ENCODE measurements at regions of chr10 and their contacts with region 1.

Region 1: GRCh38 chr10:17430647-17431355 is 23.6 kb downstream of the ST8SIA6 start:
- DNase-seq: peak; percentile 44 to 69
- ATAC-seq: peak; percentile 86 to 95; a peak in 5 of 6 replicates
- H3K4me3 ChIP-seq: no peak overlapping the region
- H3K27ac ChIP-seq: no peak overlapping the region
- H3K4me1 ChIP-seq: no peaks in the 10 kb centered on the region
- CTCF ChIP-seq: peak; percentile 87
- EP300 ChIP-seq: no peak
- POLR2A ChIP-seq: no peak
- RAD21 ChIP-seq: peak; percentile 78 to 80

Region 2: GRCh38 chr10:17409170-17409733 is 21.5 kb before region 1 on chr10:
- CTCF ChIA-PET with region 1: interaction called, 12 read pairs
- POLR2A ChIA-PET with region 1: no interaction called
- DNase-seq: peak in 1 of 2 experiments; percentile 14
- ATAC-seq: peak in 1 of 2 experiments; percentile 51; a peak in 2 of 6 replicates
- H3K4me3 ChIP-seq: no peak overlapping the region
- H3K27ac ChIP-seq: no peak overlapping the region
- H3K4me1 ChIP-seq: no peaks in the 10 kb centered on the region
- CTCF ChIP-seq: peak; percentile 44; the same call in 2 of the 3 replicates
- EP300 ChIP-seq: no peak
- POLR2A ChIP-seq: no peak
- RAD21 ChIP-seq: peak; percentile 31 to 56; a peak in 3 of 5 replicates

Region 3: GRCh38 chr10:17418249-17418648 is 12.6 kb before region 1 on chr10:
- CTCF ChIA-PET with region 1: interaction called, 28 read pairs
- POLR2A ChIA-PET with region 1: no interaction called
- DNase-seq: no peak
- ATAC-seq: no peak
- H3K4me3 ChIP-seq: no peak overlapping the region
- H3K27ac ChIP-seq: no peak overlapping the region
- H3K4me1 ChIP-seq: no peaks in the 10 kb centered on the region
- CTCF ChIP-seq: no peak
- EP300 ChIP-seq: no peak
- POLR2A ChIP-seq: no peak
- RAD21 ChIP-seq: no peak

Region 4: DNA sequence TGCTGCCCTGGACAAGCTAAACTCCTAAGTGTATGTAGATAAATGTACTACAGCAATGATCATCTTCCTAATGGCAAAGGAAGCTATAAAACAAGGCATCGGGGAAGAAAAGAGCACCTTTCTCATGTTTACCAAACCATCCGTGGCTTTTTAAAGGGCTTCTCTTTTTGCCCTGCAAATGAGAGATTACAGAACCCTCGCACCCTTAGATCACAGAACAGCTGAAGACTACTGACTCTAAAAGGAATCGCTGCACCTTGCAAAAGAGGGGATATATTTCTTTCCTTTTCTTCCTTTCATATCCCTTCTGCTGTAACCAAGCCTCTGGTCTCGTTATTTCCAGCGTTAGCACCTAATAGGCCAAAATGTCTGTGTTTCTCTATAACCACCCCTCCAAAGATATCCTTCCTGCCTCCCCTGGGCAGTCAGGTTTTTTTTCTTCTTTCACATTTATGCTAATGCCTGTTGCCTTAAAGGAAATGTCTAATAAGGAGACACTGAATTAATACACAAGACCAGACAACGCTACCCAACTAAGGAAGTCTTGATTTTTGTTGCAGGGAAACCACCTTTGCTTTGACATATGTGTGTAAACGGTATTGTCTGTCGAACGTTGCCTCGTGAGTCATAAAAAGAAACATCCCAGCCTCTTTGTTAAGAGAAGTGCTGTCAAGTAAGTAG is 13.0 kb after region 1 on chr10:
- CTCF ChIA-PET with region 1: interaction called, 25 read pairs
- POLR2A ChIA-PET with region 1: no interaction called
- DNase-seq: no peak
- ATAC-seq: no peak
- H3K4me3 ChIP-seq: no peak overlapping the region
- H3K27ac ChIP-seq: no peak overlapping the region
- H3K4me1 ChIP-seq: no peaks in the 10 kb centered on the region
- CTCF ChIP-seq: no peak
- EP300 ChIP-seq: no peak
- POLR2A ChIP-seq: no peak
- RAD21 ChIP-seq: no peak

Measured in A549 (cell line).